Heart right ventricle (tissue), 16 donors: ENCODE measurements at regions of chr7 and their contacts with region 1.

Region 1: DNA sequence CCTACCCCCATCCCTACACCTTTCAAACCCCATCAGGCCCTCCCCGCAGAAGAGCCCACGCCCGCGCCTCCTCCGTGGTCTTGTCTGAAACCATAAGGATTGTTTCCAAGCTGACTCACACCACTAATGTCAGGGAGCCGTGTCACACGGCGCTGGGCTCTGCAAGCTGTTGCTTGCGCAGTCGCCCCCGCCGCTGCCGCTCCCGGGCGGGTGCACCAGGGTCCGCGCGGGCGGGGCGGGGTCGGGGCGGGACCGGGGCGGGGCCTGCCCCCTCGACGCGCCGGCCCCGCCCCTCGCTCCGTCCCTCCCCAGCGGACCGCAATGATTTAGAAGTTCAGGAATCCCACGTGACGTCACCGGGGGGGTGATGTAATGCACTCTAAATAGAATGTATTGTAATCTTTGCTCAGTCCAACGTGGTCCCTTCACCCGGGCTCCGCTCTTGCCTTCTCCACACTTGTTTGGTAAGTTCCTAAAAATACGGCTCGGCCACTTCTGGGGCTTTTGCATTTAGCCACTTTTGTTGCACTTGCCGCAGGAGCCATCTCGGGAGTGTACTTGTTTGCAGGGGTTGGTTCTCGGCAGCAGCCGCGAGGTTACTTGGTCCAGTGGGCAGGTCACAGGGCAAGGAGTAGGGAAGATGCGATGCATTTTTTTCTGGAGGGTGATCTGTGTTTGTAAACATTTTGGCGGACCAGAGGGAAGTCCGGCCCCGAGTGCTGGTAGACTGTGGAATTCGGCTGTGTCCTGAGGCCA is 3.2 kb upstream of the CREB5 start:
- DNase-seq: peak; percentile 91 to 98
- ATAC-seq: peak; percentile 84 to 93 (median 86)
- H3K4me3 ChIP-seq: peak overlapping the region; percentile 46 to 94 (median 78)
- H3K27ac ChIP-seq: peak overlapping the region; percentile 79 to 99 (median 88)
- H3K4me1 ChIP-seq: peaks cover 0 to 63% (median 38%) of the 10 kb centered on the region in 9 donors
- H3K27me3 ChIP-seq: peaks cover 0 to 60% (median 0%) of the 10 kb centered on the region in 7 donors
- CTCF ChIP-seq: no peak

Region 2: GRCh38 chr7:28354601-28355402 is 54.3 kb before region 1 on chr7:
- intact Hi-C with region 1: no loop called
- DNase-seq: no peak
- ATAC-seq: peak in 2 of 8 donors; percentile 68 to 71
- H3K4me3 ChIP-seq: no peak overlapping the region
- H3K27ac ChIP-seq: no peak overlapping the region
- H3K4me1 ChIP-seq: peaks cover 0 to 27% (median 0%) of the 10 kb centered on the region in 9 donors
- H3K27me3 ChIP-seq: peaks cover 0 to 6% (median 0%) of the 10 kb centered on the region in 7 donors
- CTCF ChIP-seq: no peak

Region 3: GRCh38 chr7:28536259-28536658 is 127.1 kb after region 1 on chr7:
- intact Hi-C with region 1: loop called in 4 of 10 experiments (anchors 5 to 10 kb)
- DNase-seq: no peak
- ATAC-seq: no peak
- H3K4me3 ChIP-seq: no peak overlapping the region
- H3K27ac ChIP-seq: no peak overlapping the region
- H3K4me1 ChIP-seq: peaks cover 4 to 21% (median 10%) of the 10 kb centered on the region in 9 donors
- H3K27me3 ChIP-seq: peaks cover 0 to 2% (median 0%) of the 10 kb centered on the region in 7 donors
- CTCF ChIP-seq: peak in 3 of 9 donors; percentile 27 to 33 (median 29)

Region 4: DNA sequence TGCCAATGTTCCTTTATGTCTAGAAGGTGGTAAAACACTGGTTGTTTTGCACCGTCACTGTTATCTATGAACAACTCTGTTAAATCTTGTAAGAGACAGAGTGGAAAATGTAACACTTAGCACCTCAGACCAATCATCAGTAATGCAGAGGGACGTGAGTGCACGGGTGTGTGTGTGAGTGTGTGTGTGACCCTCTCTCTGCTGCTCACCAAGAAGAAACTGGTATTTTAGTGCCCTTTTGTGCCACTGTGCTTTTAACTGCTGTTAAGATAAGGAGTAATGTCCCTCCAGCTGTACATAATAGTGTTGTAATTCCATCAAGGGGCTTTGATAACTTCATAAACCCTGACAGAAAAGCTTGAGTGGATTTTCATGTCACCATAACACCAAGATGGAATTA is 133.3 kb after region 1 on chr7:
- intact Hi-C with region 1: loop called in 3 of 10 experiments (anchors 10 kb)
- DNase-seq: no peak
- ATAC-seq: peak in 1 of 8 donors; percentile 12
- H3K4me3 ChIP-seq: no peak overlapping the region
- H3K27ac ChIP-seq: no peak overlapping the region
- H3K4me1 ChIP-seq: peaks cover 0 to 18% (median 0%) of the 10 kb centered on the region in 9 donors
- H3K27me3 ChIP-seq: peaks cover 0 to 2% (median 0%) of the 10 kb centered on the region in 7 donors
- CTCF ChIP-seq: no peak

Region 5: DNA sequence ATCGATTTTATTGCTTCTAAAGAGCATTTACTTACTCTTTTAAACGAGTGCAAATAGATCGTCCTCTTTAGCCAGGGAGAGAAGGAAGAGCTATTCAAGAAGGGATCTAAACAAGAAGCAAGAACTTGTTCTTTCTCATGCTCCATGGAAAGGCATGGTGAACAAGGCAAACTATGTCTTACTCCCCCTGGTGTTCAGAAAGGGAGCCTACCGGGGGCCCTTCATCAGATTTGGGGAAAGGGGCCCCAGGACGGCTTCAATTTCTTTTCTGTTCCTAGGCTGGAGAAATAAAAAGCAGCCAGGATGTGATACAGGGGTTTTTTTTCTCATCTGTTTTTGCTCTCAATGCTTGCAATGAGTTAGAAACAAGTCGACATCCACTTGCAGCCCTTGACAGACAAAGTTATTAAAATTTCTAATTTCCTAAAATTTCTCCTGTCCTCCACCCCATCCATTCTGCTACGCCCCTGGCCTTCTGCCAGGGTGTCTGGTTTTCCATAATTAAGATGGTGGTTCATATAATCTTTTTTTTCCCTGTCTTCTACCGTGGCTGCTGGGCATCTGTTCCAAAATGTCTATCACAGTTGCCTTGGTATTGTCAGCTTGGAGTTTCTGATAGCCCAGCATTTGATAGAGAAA is 217.6 kb after region 1 on chr7:
- intact Hi-C with region 1: loop called in 5 of 10 experiments (anchors 2 to 5 kb)
- DNase-seq: no peak
- ATAC-seq: peak in 1 of 8 donors; percentile 46
- H3K4me3 ChIP-seq: no peak overlapping the region
- H3K27ac ChIP-seq: peak overlapping the region in 5 of 10 donors; percentile 0 to 63 (median 1)
- H3K4me1 ChIP-seq: peaks cover 0 to 84% (median 42%) of the 10 kb centered on the region in 9 donors
- H3K27me3 ChIP-seq: no peaks in the 10 kb centered on the region
- CTCF ChIP-seq: peak; percentile 28 to 79 (median 71)

Region 6: DNA sequence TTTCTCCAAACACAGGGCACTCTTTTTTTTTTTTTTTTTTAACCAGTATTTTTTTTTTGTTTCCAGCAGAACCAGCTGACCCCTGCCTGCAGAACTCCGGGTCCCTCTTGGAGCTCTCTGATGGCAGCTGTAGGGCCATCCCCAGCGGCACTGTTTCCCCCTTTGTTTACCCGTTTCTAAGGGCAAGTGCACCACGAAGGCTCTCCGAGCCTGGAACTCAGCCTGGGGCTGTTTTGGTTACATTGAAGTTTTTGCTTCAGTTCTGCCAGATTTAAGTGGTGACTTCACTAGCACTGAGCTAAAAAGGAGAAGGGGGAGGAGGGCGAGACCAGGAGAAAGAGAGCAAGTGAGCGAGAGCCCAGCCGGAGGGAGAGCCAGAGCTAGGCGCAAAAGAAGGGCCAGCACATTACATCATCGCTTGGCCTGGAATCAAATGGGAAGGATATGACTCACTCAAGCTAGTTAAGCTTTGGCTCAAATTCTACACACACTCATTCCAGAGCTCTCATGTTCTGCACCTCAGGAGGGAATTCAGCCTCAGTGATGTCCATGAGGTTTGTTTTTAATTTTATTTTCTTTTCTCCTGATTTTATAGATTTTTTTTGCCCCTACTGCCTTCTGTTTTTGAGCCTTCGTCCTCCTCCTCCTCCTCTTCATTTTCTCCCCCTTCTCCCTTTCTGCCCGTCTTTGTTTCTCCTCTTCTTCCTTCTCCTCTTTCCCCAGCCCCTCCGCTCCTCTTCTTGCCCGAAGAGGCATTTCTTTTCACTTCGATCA is 276.7 kb after region 1 on chr7:
- intact Hi-C with region 1: loop called in 6 of 10 experiments (anchors 5 to 10 kb)
- DNase-seq: peak; percentile 78 to 99
- ATAC-seq: peak; percentile 92 to 96 (median 95)
- H3K4me3 ChIP-seq: peak overlapping the region; percentile 40 to 69 (median 56)
- H3K27ac ChIP-seq: peak overlapping the region; percentile 59 to 96 (median 87)
- H3K4me1 ChIP-seq: peaks cover 3 to 69% (median 38%) of the 10 kb centered on the region in 9 donors
- H3K27me3 ChIP-seq: no peaks in the 10 kb centered on the region
- CTCF ChIP-seq: no peak

Region 7: GRCh38 chr7:28705350-28705749 is 296.2 kb after region 1 on chr7:
- intact Hi-C with region 1: no loop called
- DNase-seq: no peak
- ATAC-seq: no peak
- H3K4me3 ChIP-seq: no peak overlapping the region
- H3K27ac ChIP-seq: no peak overlapping the region
- H3K4me1 ChIP-seq: peaks cover 7 to 56% (median 41%) of the 10 kb centered on the region in 9 donors
- H3K27me3 ChIP-seq: no peaks in the 10 kb centered on the region
- CTCF ChIP-seq: no peak